ENCODE measurements at regions of chr1 and their contacts with region 1.

Region 1: DNA sequence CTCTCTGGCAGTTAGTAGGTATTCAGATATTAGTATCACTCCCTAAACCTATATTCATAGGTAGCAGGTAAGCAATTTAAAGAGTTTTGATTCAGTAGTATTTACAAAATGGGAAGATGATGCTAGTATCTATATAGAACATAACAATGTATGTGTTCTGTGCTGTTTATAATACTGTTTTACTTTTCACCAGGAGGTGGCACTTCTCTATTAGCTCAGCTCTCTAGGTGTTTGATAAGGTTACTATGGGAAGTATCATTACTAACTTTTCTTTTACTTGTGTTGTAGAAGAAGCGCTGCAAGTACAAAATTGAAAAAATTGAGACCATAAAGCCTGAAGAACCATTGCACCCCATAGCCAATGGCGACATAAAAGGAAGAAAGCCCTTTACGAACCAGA is 49.4 kb upstream of the FASLG start:
- DNase-seq: peak in 3 of 14 experiments; percentile 56 to 63 (median 58)
- ATAC-seq: peak; percentile 84
- H3K4me3 ChIP-seq: no peak overlapping the region
- H3K4me3 Mint-ChIP-seq: no peak overlapping the region
- H3K27ac ChIP-seq: no peak overlapping the region
- H3K27ac Mint-ChIP-seq: no peak overlapping the region
- H3K4me1 ChIP-seq: no peaks in the 10 kb centered on the region
- H3K4me1 Mint-ChIP-seq: peaks cover 6% of the 10 kb centered on the region
- H3K27me3 ChIP-seq: no peaks in the 10 kb centered on the region
- H3K27me3 Mint-ChIP-seq: no peaks in the 10 kb centered on the region
- CTCF ChIP-seq: peak; percentile 84

Region 2: DNA sequence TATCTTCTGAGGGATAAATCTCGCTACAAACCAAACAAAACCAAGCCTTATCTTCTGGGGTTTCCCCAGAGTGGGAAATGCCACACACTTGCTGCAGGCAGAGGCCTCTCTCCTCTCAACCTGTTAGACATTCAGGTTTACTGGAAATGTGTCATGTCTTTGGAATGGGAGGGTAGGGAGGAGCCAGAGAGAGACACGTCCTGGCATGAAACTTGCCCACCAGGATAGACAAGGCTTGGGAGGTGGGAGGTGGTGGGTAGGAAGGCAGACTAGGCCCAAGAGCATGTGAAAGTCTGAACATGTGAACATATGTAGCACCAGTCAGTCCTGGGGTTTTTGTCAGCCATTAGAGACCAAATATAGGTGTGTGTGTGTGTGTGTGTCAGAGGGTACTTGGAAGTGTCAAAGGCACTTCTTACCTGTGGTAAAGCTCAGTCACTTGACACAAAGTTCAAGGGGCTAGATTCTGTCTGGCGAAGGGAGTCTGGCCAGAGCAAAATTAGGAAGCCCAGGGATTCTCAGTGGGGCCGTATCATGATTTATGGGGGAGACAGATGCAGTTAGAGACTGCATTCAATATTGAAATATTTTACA is 133.2 kb before region 1 on chr1:
- CTCF ChIA-PET with region 1: no interaction called
- POLR2A ChIA-PET with region 1: no interaction called
- intact Hi-C with region 1: no loop called
- DNase-seq: no peak
- ATAC-seq: no peak
- H3K4me3 ChIP-seq: no peak overlapping the region
- H3K4me3 Mint-ChIP-seq: no peak overlapping the region
- H3K27ac ChIP-seq: no peak overlapping the region
- H3K27ac Mint-ChIP-seq: no peak overlapping the region
- H3K4me1 ChIP-seq: peaks cover 3% of the 10 kb centered on the region
- H3K4me1 Mint-ChIP-seq: peaks cover 8% of the 10 kb centered on the region
- H3K27me3 ChIP-seq: no peaks in the 10 kb centered on the region
- H3K27me3 Mint-ChIP-seq: peaks cover 6% of the 10 kb centered on the region
- CTCF ChIP-seq: no peak

Region 3: GRCh38 chr1:172654535-172654934 is 45.0 kb after region 1 on chr1:
- CTCF ChIA-PET with region 1: interaction called, 3 read pairs
- POLR2A ChIA-PET with region 1: no interaction called
- intact Hi-C with region 1: loop called in 1 of 2 experiments (anchors 5 kb)
- DNase-seq: no peak
- ATAC-seq: no peak
- H3K4me3 ChIP-seq: no peak overlapping the region
- H3K4me3 Mint-ChIP-seq: no peak overlapping the region
- H3K27ac ChIP-seq: no peak overlapping the region
- H3K27ac Mint-ChIP-seq: no peak overlapping the region
- H3K4me1 ChIP-seq: peaks cover 20% of the 10 kb centered on the region
- H3K4me1 Mint-ChIP-seq: peaks cover 35% of the 10 kb centered on the region
- H3K27me3 ChIP-seq: no peaks in the 10 kb centered on the region
- H3K27me3 Mint-ChIP-seq: no peaks in the 10 kb centered on the region
- CTCF ChIP-seq: no peak

Region 4: GRCh38 chr1:172826096-172826743 is 216.7 kb after region 1 on chr1:
- CTCF ChIA-PET with region 1: no interaction called
- POLR2A ChIA-PET with region 1: no interaction called
- intact Hi-C with region 1: no loop called
- DNase-seq: peak in 3 of 14 experiments; percentile 29 to 35 (median 34)
- ATAC-seq: no peak
- H3K4me3 ChIP-seq: no peak overlapping the region
- H3K4me3 Mint-ChIP-seq: no peak overlapping the region
- H3K27ac ChIP-seq: no peak overlapping the region
- H3K27ac Mint-ChIP-seq: no peak overlapping the region
- H3K4me1 ChIP-seq: no peaks in the 10 kb centered on the region
- H3K4me1 Mint-ChIP-seq: no peaks in the 10 kb centered on the region
- H3K27me3 ChIP-seq: no peaks in the 10 kb centered on the region
- H3K27me3 Mint-ChIP-seq: no peaks in the 10 kb centered on the region
- CTCF ChIP-seq: peak; percentile 63

Region 5: DNA sequence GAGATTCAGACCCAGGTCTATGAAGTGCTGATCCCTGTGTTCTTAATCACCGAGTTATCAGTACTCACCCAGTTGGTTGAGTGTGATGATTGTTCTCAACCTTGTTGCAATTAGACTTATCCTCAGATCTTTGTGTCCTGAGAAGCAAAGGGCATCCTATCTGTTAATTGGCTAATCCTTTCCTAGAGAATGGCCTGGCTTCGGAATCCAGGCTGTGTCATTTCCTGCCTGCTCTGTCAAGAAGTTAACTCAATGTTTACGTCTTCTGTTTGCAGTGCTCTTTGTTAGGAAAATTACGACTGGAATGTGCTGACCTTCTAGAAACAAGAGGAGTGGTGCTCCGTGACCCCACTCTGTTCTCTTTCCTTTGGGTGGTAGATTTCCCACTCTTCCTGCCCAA is 1243.5 kb after region 1 on chr1:
- CTCF ChIA-PET with region 1: no interaction called
- POLR2A ChIA-PET with region 1: no interaction called
- intact Hi-C with region 1: loop called in 1 of 2 experiments (anchors 10 kb)
- DNase-seq: no peak
- ATAC-seq: no peak
- H3K4me3 ChIP-seq: no peak overlapping the region
- H3K4me3 Mint-ChIP-seq: no peak overlapping the region
- H3K27ac ChIP-seq: no peak overlapping the region
- H3K27ac Mint-ChIP-seq: no peak overlapping the region
- H3K4me1 ChIP-seq: no peaks in the 10 kb centered on the region
- H3K4me1 Mint-ChIP-seq: no peaks in the 10 kb centered on the region
- H3K27me3 ChIP-seq: no peaks in the 10 kb centered on the region
- H3K27me3 Mint-ChIP-seq: no peaks in the 10 kb centered on the region
- CTCF ChIP-seq: no peak